Right cardiac atrium (tissue), 5 donors: ENCODE measurements at regions of chr3 and their contacts with region 1.

Region 1: DNA sequence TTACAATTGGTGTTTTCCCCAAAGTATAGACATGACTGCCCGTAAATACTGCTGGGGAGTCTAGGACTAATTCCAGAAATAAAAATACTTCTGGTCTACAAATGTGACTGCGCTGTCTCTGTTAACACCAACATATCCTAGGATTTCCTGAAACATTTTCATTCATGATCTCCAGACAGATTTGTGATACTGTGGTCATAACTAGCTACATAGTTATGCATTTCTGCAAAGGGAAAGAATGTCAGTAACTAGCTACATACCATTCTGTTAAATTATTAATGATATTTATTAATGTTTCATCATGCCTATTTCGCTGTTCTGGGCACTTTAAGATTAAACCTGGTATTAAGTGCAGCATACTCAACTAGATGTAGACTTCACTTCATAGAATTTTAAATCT is 33.3 kb downstream of the SETD5 start:
- DNase-seq: no peak
- ATAC-seq: no peak
- H3K4me3 ChIP-seq: no peak overlapping the region
- H3K27ac ChIP-seq: no peak overlapping the region
- H3K4me1 ChIP-seq: no peaks in the 10 kb centered on the region
- H3K27me3 ChIP-seq: no peaks in the 10 kb centered on the region

Region 2: DNA sequence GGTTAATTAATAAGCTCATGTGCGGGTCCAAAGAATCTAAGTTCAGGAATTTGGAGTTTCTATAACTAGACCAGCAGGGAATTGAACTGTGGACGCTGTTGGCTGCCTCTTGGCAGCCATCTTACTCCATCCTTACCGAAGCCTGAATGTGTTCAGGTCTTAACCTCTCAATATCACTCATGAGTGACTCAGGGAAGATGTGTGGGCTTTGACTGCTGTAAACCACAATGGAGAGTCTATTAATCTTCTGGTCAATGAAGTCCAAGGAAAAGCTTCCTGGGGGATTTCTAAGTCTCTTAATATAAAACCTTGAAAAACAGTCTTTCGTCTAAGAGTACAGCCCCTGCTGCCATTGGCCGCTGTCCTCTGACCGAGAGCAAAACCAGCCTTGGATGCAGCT is 614.6 kb before region 1 on chr3:
- intact Hi-C with region 1: no loop called
- DNase-seq: no peak
- ATAC-seq: no peak
- H3K4me3 ChIP-seq: no peak overlapping the region
- H3K27ac ChIP-seq: no peak overlapping the region
- H3K4me1 ChIP-seq: no peaks in the 10 kb centered on the region
- H3K27me3 ChIP-seq: no peaks in the 10 kb centered on the region

Region 3: GRCh38 chr3:9387322-9387655 is 43.4 kb before region 1 on chr3:
- intact Hi-C with region 1: loop called in 2 of 4 experiments (anchors 5 kb)
- DNase-seq: no peak
- ATAC-seq: no peak
- H3K4me3 ChIP-seq: no peak overlapping the region
- H3K27ac ChIP-seq: no peak overlapping the region
- H3K4me1 ChIP-seq: no peaks in the 10 kb centered on the region
- H3K27me3 ChIP-seq: no peaks in the 10 kb centered on the region

Region 4: DNA sequence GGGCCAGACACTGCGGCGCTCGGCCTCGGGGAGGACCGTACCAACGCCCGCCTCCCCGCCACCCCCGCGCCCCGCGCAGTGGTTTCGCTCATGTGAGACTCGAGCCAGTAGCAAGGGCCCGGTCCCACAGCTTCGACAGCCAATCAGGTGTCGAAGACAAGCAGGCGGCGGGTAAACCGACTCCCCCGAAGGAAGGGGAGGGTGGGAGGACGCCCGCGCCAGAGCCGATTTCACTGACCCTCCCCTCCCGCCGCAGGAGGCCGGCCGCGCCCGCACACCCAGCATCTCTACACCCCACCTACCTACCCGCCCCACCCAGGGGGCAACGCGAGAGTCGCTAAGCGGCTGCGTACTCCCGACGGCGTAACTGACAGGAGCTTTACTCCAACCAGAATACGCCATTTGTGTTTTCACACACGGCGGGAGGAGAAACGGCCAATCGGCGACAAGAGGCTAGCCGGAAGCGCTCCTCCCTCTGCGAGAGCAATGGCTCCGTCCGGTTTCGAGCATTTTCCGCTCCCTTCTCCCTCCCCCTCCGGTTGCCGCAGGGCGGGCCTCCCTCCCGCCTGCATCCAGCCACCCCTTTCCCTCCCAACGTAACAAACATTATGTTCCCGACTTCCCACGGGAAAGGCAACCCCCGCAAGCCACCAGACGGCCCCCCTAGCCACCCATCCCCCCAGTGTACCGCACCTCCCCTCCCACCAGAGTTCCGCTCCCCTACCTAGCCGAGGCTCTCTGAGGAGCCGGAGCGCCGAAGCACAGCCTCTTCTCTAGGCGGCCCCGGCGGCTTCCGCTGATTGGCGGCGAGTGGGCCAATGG is 33.8 kb before region 1 on chr3:
- intact Hi-C with region 1: loop called in 2 of 4 experiments (anchors 5 kb)
- DNase-seq: peak; percentile 98 to 99 (median 99)
- ATAC-seq: peak; percentile 93
- H3K4me3 ChIP-seq: peak overlapping the region; percentile 68
- H3K27ac ChIP-seq: peak overlapping the region; percentile 86
- H3K4me1 ChIP-seq: no peaks in the 10 kb centered on the region
- H3K27me3 ChIP-seq: no peaks in the 10 kb centered on the region

Region 5: GRCh38 chr3:10392244-10392643 is 961.5 kb after region 1 on chr3:
- intact Hi-C with region 1: no loop called
- DNase-seq: no peak
- ATAC-seq: no peak
- H3K4me3 ChIP-seq: no peak overlapping the region
- H3K27ac ChIP-seq: no peak overlapping the region
- H3K4me1 ChIP-seq: no peaks in the 10 kb centered on the region
- H3K27me3 ChIP-seq: no peaks in the 10 kb centered on the region